Endothelial cell of umbilical vein (primary cell): ENCODE measurements at regions of chr3 and their contacts with region 1.

Region 1: DNA sequence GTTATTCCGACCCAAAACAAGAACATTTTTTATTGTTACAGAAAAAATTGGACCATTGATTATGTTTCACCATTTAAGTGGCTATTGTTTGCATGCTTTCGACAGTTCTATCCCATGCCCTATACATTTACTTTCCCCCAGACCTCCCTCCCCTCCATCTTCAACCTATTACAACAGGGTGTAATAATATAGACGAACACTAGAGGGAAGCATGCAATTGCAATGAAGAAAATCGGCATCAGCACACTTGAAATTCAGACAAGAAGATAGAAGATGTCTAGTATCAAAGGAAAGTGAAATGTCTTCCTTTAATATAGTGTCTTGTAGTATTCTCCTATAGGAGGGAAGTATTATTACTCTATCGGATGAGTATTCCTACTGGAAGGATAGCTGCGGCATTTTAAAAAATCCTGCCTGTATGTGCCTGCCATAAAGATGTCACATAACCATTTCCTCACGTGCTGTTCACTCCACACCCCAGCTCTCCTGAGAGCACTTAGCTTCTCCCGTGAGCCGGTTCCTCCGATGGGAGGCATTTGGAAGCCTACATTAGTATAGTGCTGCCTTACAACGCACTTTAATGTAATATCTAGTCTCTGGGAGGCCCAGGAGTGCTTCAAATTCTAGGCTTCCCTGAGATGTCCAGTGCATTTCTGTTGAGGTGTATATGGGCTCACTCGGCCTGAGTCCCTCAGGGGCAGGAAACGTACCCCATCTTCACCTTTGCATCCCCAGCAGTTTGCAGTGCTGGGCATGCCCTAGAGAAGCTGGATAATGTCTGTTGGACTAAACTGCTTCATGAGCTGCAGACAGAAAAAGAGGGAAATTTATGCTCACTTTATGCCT is 17.8 kb upstream of the ERICH6 start:
- DNase-seq: peak; percentile 69
- H3K4me3 ChIP-seq: no peak overlapping the region
- H3K27ac ChIP-seq: no peak overlapping the region
- H3K4me1 ChIP-seq: no peaks in the 10 kb centered on the region
- H3K27me3 ChIP-seq: peaks cover 0 to 2% of the 10 kb centered on the region in 2 experiments
- CTCF ChIP-seq: peak; percentile 51 to 61
- POLR2A ChIP-seq: no peak

Region 2: GRCh38 chr3:150273396-150273795 is 448.1 kb before region 1 on chr3:
- CTCF ChIA-PET with region 1: no interaction called
- POLR2A ChIA-PET with region 1: interaction called, 10 read pairs
- dilution Hi-C with region 1: no loop called
- intact Hi-C with region 1: no loop called
- DNase-seq: no peak
- H3K4me3 ChIP-seq: no peak overlapping the region
- H3K27ac ChIP-seq: no peak overlapping the region
- H3K4me1 ChIP-seq: peaks cover 10% of the 10 kb centered on the region
- H3K27me3 ChIP-seq: no peaks in the 10 kb centered on the region
- CTCF ChIP-seq: no peak
- POLR2A ChIP-seq: no peak

Region 3: GRCh38 chr3:150528354-150528797 is 193.1 kb before region 1 on chr3:
- CTCF ChIA-PET with region 1: no interaction called
- POLR2A ChIA-PET with region 1: no interaction called
- dilution Hi-C with region 1: no loop called
- intact Hi-C with region 1: loop called (anchors 5 kb)
- DNase-seq: peak; percentile 49
- H3K4me3 ChIP-seq: no peak overlapping the region
- H3K27ac ChIP-seq: no peak overlapping the region
- H3K4me1 ChIP-seq: no peaks in the 10 kb centered on the region
- H3K27me3 ChIP-seq: peaks cover 0 to 2% of the 10 kb centered on the region in 2 experiments
- CTCF ChIP-seq: peak in 1 of 2 donors; percentile 8
- POLR2A ChIP-seq: no peak

Region 4: GRCh38 chr3:150577859-150578258 is 143.6 kb before region 1 on chr3:
- CTCF ChIA-PET with region 1: no interaction called
- POLR2A ChIA-PET with region 1: no interaction called
- dilution Hi-C with region 1: no loop called
- intact Hi-C with region 1: no loop called
- DNase-seq: peak; percentile 43
- H3K4me3 ChIP-seq: no peak overlapping the region
- H3K27ac ChIP-seq: no peak overlapping the region
- H3K4me1 ChIP-seq: no peaks in the 10 kb centered on the region
- H3K27me3 ChIP-seq: no peaks in the 10 kb centered on the region
- CTCF ChIP-seq: no peak
- POLR2A ChIP-seq: no peak

Region 5: DNA sequence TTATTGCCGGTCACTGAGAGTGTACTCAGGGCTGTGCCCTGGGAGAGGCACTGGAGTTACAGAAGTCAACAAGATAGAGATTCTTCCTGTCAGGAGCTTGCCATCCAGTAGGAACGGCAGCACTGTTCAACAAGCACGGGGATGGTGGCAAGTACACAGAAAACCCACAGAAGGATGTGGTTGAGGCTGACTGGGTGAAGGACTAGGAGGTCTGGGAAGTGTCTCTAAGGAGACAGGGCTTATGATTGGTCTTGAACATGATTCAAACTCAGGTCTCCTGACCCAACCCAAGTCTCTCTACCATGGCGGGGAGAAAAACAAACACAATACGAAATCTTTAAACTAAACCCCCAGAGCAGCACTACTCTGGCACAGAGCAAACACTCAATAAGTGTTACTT is 55.3 kb before region 1 on chr3:
- CTCF ChIA-PET with region 1: no interaction called
- POLR2A ChIA-PET with region 1: no interaction called
- dilution Hi-C with region 1: no loop called
- intact Hi-C with region 1: no loop called
- DNase-seq: no peak
- H3K4me3 ChIP-seq: no peak overlapping the region
- H3K27ac ChIP-seq: no peak overlapping the region
- H3K4me1 ChIP-seq: no peaks in the 10 kb centered on the region
- H3K27me3 ChIP-seq: peaks cover 5 to 10% of the 10 kb centered on the region in 2 experiments
- CTCF ChIP-seq: no peak
- POLR2A ChIP-seq: no peak

Region 6: GRCh38 chr3:150681057-150681456 is 40.5 kb before region 1 on chr3:
- CTCF ChIA-PET with region 1: no interaction called
- POLR2A ChIA-PET with region 1: no interaction called
- dilution Hi-C with region 1: no loop called
- intact Hi-C with region 1: no loop called
- DNase-seq: no peak
- H3K4me3 ChIP-seq: no peak overlapping the region
- H3K27ac ChIP-seq: no peak overlapping the region
- H3K4me1 ChIP-seq: no peaks in the 10 kb centered on the region
- H3K27me3 ChIP-seq: peaks cover 0 to 1% of the 10 kb centered on the region in 2 experiments
- CTCF ChIP-seq: no peak
- POLR2A ChIP-seq: no peak

Region 7: GRCh38 chr3:150787741-150788370 is 66.3 kb after region 1 on chr3:
- CTCF ChIA-PET with region 1: interaction called, 9 read pairs
- POLR2A ChIA-PET with region 1: no interaction called
- dilution Hi-C with region 1: no loop called
- intact Hi-C with region 1: loop called (anchors 1 kb)
- DNase-seq: peak; percentile 60
- H3K4me3 ChIP-seq: no peak overlapping the region
- H3K27ac ChIP-seq: no peak overlapping the region
- H3K4me1 ChIP-seq: peaks cover 5% of the 10 kb centered on the region
- H3K27me3 ChIP-seq: peaks cover 16 to 24% of the 10 kb centered on the region in 2 experiments
- CTCF ChIP-seq: peak; percentile 86 to 93
- POLR2A ChIP-seq: no peak

Region 8: DNA sequence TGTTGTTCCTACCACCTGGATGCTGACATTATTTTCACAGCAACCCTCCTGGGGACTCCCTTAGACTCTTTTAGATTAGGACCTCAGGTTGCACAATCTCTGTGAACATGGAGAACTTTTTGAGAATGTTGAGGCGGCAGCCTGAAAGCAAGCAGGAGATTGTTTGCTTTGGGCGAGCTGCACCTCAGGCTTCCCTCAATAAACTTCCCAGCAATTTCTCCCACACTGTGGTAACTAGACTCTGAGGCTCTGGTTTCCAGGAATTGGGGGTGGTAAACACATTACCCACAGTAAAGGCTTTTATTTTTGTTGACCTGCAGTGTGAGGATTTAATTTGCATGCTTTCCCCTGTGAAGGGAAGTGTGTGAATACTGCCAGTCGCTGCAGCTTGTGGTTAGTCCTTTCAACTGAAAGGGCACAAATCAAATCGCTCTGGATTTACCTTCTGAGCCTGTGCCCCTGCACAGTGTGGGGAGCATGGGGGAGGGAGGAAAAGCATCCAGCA is 76.7 kb after region 1 on chr3:
- CTCF ChIA-PET with region 1: no interaction called
- POLR2A ChIA-PET with region 1: no interaction called
- dilution Hi-C with region 1: no loop called
- intact Hi-C with region 1: no loop called
- DNase-seq: no peak
- H3K4me3 ChIP-seq: no peak overlapping the region
- H3K27ac ChIP-seq: no peak overlapping the region
- H3K4me1 ChIP-seq: no peaks in the 10 kb centered on the region
- H3K27me3 ChIP-seq: peaks cover 2 to 4% of the 10 kb centered on the region in 2 experiments
- CTCF ChIP-seq: no peak
- POLR2A ChIP-seq: no peak

Region 9: GRCh38 chr3:150870396-150870795 is 148.9 kb after region 1 on chr3:
- CTCF ChIA-PET with region 1: interaction called, 39 read pairs
- POLR2A ChIA-PET with region 1: no interaction called
- dilution Hi-C with region 1: no loop called
- intact Hi-C with region 1: loop called (anchors 1 kb)
- DNase-seq: no peak
- H3K4me3 ChIP-seq: no peak overlapping the region
- H3K27ac ChIP-seq: no peak overlapping the region
- H3K4me1 ChIP-seq: no peaks in the 10 kb centered on the region
- H3K27me3 ChIP-seq: peaks cover 2 to 6% of the 10 kb centered on the region in 2 experiments
- CTCF ChIP-seq: no peak
- POLR2A ChIP-seq: no peak